ENCODE measurements at regions of chr7 and their contacts with region 1.

Region 1: GRCh38 chr7:48269066-48269465 is 97.8 kb downstream of the ABCA13 start:
- DNase-seq: peak; percentile 18
- ATAC-seq: no peak
- H3K4me3 ChIP-seq: no peak overlapping the region
- H3K27ac ChIP-seq: no peak overlapping the region
- H3K4me1 ChIP-seq: no peaks in the 10 kb centered on the region
- H3K27me3 ChIP-seq: no peaks in the 10 kb centered on the region
- CTCF ChIP-seq: no peak
- POLR2A ChIP-seq: no peak
- RAD21 ChIP-seq: no peak

Region 2: DNA sequence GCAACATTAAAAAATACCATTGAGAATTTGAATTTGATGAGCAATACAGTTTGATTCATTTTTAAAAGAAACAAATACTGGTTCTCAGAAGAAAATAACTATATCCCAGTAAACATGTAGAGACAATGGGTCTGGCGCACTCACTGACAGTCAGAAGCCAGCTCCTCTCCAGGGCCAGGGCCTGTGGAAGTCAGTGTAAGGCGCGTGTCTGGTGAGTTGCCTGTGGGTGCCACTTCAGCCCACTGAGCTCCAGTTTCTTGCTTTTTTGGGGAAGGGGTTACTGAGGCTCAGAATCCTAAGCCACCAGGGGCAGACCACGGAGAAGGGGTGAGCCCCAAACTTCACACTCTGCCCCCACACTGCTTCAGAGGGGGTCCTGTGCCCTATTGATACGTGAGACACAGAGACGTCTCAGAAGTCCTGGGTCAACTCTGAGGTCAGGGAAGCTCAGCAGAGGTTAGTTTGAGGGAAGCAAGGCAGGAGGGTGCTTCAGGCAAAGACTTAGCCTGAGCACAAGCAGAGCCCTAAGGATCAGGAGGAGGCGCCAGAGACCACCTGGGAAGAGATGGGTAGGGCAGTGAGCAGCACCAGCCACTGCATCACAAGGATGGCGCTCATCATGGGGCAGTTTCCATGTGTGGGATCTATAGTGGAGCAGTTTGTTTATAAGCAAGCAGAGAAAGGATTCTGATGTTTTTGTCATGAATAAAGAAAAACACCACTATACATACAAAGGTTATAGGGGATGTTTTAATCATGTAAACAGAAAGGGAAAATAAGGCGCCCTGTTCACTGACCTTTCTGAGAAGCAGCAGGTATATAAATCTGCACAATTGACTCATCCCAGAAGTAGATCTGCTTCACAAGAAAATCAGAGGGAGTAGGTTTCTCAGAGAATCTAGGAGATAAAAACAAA is 416.5 kb before region 1 on chr7:
- CTCF ChIA-PET with region 1: no interaction called
- POLR2A ChIA-PET with region 1: no interaction called
- dilution Hi-C with region 1: no loop called
- in situ Hi-C with region 1: no loop called
- intact Hi-C with region 1: no loop called
- DNase-seq: no peak
- ATAC-seq: no peak
- H3K4me3 ChIP-seq: no peak overlapping the region
- H3K27ac ChIP-seq: no peak overlapping the region
- H3K4me1 ChIP-seq: no peaks in the 10 kb centered on the region
- H3K27me3 ChIP-seq: peaks cover 6% of the 10 kb centered on the region; the same call in 1 of the 2 replicates
- CTCF ChIP-seq: 0 out of 2 replicates have a peak, but pooled peaks have one; percentile 5
- POLR2A ChIP-seq: no peak
- RAD21 ChIP-seq: no peak

Region 3: GRCh38 chr7:48171202-48171601 is 97.9 kb before region 1 on chr7 and contains the start of gene ABCA13:
- CTCF ChIA-PET with region 1: no interaction called
- POLR2A ChIA-PET with region 1: no interaction called
- dilution Hi-C with region 1: no loop called
- in situ Hi-C with region 1: no loop called
- intact Hi-C with region 1: loop called (anchors 5 kb)
- DNase-seq: peak; percentile 43
- ATAC-seq: peak; percentile 14; the same call in 1 of the 2 replicates
- H3K4me3 ChIP-seq: no peak within 1 kb of the TSS
- H3K27ac ChIP-seq: no peak within 1 kb of the TSS
- H3K4me1 ChIP-seq: peaks cover 3% of the 10 kb centered on the region; the same call in 1 of the 2 replicates
- H3K27me3 ChIP-seq: no peaks in the 10 kb centered on the region
- CTCF ChIP-seq: no peak
- POLR2A ChIP-seq: no peak
- RAD21 ChIP-seq: no peak
- total RNA-seq, gene ABCA13: under 0.01 TPM in 2 replicates

Measured in IMR-90 (cell line).